Naive thymus-derived CD4-positive, alpha-beta T cell (primary cell): ENCODE measurements at regions of chr21 and their contacts with region 1.

Region 1: GRCh38 chr21:38297194-38297631 is 40.4 kb downstream of the KCNJ15 start:
- DNase-seq: no peak
- ATAC-seq: peak; percentile 57
- H3K4me3 ChIP-seq: no peak overlapping the region
- H3K4me3 Mint-ChIP-seq: peak overlapping the region in 8 of 10 donors; percentile 5 to 85 (median 65)
- H3K27ac ChIP-seq: peak overlapping the region; percentile 19
- H3K27ac Mint-ChIP-seq: peak overlapping the region in 8 of 9 donors; percentile 79 to 94 (median 88)
- H3K4me1 ChIP-seq: peaks cover 0 to 59% of the 10 kb centered on the region in 2 donors
- H3K4me1 Mint-ChIP-seq: peaks cover 23 to 91% (median 51%) of the 10 kb centered on the region in 7 donors
- H3K27me3 ChIP-seq: no peaks in the 10 kb centered on the region
- H3K27me3 Mint-ChIP-seq: peaks cover 0 to 3% (median 0%) of the 10 kb centered on the region in 5 donors

Region 2: DNA sequence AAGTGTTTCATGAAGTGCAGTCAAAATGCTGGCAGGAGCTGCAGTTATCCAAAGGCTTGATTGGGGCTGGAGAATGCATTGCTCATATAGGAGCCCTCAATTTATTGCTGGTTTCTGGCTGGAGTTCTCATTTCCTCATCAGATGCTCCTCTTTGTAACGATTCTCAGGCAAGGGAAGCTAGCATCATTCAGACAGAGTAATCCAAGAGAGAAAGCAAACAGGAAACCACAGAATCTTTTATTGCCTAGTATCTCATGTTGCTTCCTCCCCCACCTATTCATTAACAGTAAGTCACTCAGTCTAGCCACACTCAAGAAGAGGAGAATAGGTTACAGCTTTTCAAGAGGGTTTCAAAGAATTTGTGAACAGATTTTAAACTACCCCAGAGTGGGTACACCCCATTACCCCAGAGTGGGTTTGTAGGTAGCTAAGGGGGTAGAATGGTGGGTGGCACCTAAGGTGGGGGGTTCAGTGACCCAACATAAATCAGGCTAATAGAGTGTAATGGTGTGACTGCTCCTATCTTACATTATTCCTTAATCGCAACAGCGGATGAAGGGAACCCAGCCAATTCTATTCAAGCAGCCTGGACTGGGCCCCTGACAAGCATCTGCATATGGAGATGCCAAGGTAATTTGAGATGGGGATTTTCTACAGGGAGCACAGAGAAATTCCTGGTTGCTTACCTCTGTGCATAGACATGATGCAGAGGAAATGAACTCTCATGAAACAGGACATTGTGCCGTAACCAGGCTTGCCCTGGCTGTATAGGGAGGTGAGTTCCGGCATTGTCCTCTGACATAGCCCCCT is 26.7 kb after region 1 on chr21:
- CTCF ChIA-PET with region 1: interaction called, 5 read pairs
- POLR2A ChIA-PET with region 1: interaction called, 11 read pairs
- intact Hi-C with region 1: no loop called
- DNase-seq: peak in 7 of 9 donors; percentile 51 to 79 (median 70)
- ATAC-seq: peak; percentile 97
- H3K4me3 ChIP-seq: peak overlapping the region; percentile 17
- H3K4me3 Mint-ChIP-seq: peak overlapping the region; percentile 36 to 73 (median 55)
- H3K27ac ChIP-seq: no peak overlapping the region
- H3K27ac Mint-ChIP-seq: peak overlapping the region; percentile 39 to 99 (median 92)
- H3K4me1 ChIP-seq: peaks cover 0 to 24% of the 10 kb centered on the region in 2 donors
- H3K4me1 Mint-ChIP-seq: peaks cover 17 to 44% (median 26%) of the 10 kb centered on the region in 7 donors
- H3K27me3 ChIP-seq: no peaks in the 10 kb centered on the region
- H3K27me3 Mint-ChIP-seq: peaks cover 0 to 5% (median 0%) of the 10 kb centered on the region in 5 donors

Region 3: DNA sequence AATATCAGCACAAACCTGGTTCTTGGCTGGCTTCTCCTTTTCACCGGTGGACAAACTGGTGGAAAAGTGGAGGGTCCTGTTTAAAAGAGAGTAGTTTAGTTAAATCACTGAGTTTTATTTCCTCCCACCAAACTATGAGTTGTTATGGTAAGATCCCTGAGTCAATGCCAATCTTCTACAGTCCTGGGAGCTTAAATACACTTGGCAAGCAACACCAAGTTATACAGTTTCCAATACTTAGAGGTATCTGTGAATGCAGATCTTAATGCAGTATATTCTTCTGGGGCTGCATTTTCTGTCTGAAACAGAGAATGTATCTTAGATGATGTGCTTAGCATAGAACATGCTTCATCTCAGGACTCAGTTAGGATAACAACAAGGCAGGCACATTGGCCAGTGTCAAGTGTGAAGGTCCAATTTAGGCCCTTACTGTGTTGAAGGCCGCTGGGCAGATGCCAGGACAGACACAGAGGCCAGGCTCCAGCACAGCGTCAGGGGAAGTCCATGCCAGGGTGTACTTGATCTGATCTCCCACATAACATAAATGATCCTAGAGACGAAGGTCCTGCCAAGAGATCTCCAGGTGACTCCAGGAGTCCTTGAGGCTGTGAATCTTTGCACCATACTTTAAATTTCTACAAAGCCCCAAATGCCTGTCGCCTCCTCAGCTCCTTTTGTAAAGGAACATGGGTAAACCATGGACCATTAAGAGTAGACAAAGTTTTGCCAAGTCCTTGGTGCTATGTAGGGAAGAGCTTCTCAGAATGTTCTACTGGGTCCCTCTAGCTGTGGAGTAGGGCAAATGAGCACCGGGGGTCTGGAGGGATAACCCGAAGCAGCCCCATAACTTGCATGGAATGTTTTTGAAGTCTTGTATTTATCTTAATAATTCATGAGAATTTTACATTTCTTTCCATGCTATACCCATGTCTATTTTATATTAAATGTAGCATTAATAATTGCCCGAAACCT is 36.4 kb after region 1 on chr21:
- CTCF ChIA-PET with region 1: interaction called, 3 read pairs
- POLR2A ChIA-PET with region 1: no interaction called
- intact Hi-C with region 1: loop called in 1 of 2 experiments (anchors 5 kb)
- DNase-seq: peak in 2 of 9 donors; percentile 4 to 11
- ATAC-seq: no peak
- H3K4me3 ChIP-seq: no peak overlapping the region
- H3K4me3 Mint-ChIP-seq: no peak overlapping the region
- H3K27ac ChIP-seq: no peak overlapping the region
- H3K27ac Mint-ChIP-seq: peak overlapping the region in 1 of 9 donors; percentile 72
- H3K4me1 ChIP-seq: no peaks in the 10 kb centered on the region
- H3K4me1 Mint-ChIP-seq: peaks cover 0 to 5% (median 0%) of the 10 kb centered on the region in 7 donors
- H3K27me3 ChIP-seq: no peaks in the 10 kb centered on the region
- H3K27me3 Mint-ChIP-seq: no peaks in the 10 kb centered on the region